HEK293T (cell line): ENCODE measurements at regions of chr11 and their contacts with region 1.

Region 1: DNA sequence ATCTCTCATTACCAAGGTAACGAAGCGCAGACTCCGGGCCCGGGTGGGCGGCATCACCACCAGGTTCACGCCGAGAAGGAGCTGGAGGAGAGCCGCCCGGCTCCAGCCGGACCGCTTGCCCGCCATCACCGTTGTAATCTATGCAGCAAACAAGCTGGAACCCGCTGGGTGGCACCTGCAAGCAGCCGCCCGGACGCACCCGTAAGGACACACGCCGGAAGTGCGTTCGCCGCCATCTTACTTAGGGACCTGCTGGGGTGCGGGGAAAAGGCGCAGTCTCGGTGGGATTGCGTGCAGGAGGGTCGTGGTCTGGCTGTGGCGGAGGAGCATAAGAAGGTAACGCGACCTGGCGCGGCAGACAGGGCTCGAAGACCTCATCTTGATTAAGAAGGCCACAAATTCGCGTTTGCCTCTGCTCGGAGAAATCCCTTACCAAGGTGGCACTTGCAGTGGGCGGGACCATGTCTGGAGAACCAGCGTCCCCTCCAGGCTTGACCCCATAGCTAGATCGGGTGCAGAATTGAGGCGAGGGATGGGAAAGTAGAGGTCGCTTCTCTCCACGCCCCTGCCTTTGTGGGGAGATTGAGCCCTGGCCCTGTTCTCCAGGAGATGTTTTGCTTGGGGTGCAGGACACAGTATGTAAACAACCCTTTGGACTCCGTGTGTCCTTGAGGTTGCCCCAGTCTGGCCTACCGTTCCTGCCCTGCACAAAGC is at the start of gene ACP2:
- DNase-seq: peak; percentile 89

Region 2: DNA sequence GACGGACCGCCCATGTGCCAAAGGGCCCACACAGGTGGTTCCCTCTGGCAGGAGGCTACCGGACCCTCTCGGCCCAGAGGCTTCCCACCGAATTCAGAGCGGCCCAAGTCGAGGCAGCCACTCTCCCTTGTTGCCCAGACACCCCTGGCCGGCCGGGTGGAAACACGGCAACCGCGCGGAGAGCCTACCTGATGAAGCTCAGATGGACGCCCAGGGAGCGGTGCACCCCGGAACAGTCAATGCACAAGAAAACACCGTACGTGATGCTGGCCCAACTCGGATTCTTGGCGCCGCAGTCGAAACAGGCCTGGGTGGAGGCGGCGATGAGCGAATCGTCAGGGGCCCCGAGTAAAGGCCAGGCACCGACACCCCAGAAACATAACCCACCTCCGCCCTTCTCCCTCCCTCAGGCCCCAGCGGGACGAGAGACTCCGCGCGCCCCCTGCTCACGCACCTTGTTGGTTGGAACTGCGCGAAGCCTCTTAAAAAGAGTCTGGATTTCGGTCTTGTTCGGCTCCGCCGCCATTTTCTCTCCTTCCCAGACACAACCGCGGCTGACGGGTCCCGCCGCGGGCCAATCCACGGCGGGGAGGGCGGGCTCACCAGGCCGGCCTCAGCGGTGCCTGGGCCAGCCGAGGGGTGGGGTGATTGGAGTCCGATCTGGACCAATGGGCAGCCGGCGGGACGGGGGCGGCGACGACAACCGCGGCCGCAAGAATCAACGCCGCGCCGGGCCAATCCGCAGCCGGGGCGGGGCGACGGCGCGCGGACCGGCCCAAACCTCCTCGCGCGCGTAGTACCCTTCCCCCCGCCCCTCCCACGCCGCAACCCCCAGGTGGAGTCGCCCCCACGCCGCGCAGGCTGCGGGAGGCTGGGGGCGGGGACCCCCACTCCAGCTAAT is 72.2 kb before region 1 on chr11 and contains the start of gene ARFGAP2:
- CTCF ChIA-PET with region 1: interaction called, 5 read pairs
- POLR2A ChIA-PET with region 1: interaction called, 18 read pairs
- DNase-seq: peak; percentile 99

Region 3: GRCh38 chr11:47186076-47186936 is 62.5 kb before region 1 on chr11 and contains the start of gene PACSIN3:
- CTCF ChIA-PET with region 1: interaction called, 3 read pairs
- POLR2A ChIA-PET with region 1: interaction called, 19 read pairs
- DNase-seq: peak; percentile 72

Region 4: DNA sequence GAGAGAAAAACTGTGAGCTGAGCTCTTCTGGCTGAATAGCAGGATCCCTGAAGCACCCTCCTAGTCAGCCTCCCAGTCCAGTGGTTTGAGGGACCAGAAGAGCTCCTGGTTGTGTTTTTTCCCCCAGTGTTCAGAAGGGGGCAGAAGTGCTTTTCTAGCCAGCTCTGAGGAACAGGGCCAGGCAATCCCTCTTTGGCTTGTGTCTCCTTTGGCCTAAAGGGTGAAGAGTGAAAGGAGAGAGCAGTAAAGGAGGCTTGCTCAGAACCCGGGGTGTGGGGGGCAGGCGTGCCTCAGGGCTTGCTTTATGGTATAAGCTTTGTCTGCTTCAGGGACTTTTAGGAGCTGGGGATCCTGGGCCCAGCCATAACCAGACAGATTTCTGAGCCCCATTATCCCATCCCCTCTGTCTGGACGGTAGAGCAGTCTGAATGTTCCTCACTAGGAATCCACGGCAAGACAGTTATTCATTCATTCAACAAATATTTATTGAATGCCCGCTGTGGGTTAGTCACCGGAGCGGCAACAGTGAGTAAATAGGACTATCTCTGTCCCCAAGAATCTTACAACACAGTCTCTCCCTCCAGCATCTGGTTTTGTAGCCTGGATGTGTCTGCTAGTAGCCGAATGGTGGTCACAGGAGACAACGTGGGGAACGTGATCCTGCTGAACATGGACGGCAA is 14.7 kb before region 1 on chr11:
- CTCF ChIA-PET with region 1: interaction called, 3 read pairs
- POLR2A ChIA-PET with region 1: interaction called, 41 read pairs
- DNase-seq: no peak

Region 5: GRCh38 chr11:47259178-47259977 is 10.6 kb after region 1 on chr11:
- CTCF ChIA-PET with region 1: interaction called, 8 read pairs
- POLR2A ChIA-PET with region 1: interaction called, 21 read pairs
- DNase-seq: peak; percentile 70

Region 6: GRCh38 chr11:47264521-47264920 is 15.7 kb after region 1 on chr11:
- CTCF ChIA-PET with region 1: interaction called, 8 read pairs
- POLR2A ChIA-PET with region 1: interaction called, 21 read pairs
- DNase-seq: no peak

Region 7: GRCh38 chr11:47285969-47286770 is 37.3 kb after region 1 on chr11:
- CTCF ChIA-PET with region 1: no interaction called
- POLR2A ChIA-PET with region 1: no interaction called
- DNase-seq: no peak